ENCODE measurements at regions of chr22 and their contacts with region 1.

Region 1: GRCh38 chr22:43230971-43231723 is 44.2 kb upstream of the TTLL12 start:
- DNase-seq: no peak
- ATAC-seq: no peak
- H3K4me3 ChIP-seq: no peak overlapping the region
- H3K27ac ChIP-seq: no peak overlapping the region
- H3K4me1 ChIP-seq: no peaks in the 10 kb centered on the region
- H3K27me3 ChIP-seq: peaks cover 0 to 3% (median 0%) of the 10 kb centered on the region in 3 donors
- CTCF ChIP-seq: peak; percentile 48 to 84 (median 70)
- POLR2A ChIP-seq: no peak

Region 2: GRCh38 chr22:43346521-43346929 is 115.4 kb after region 1 on chr22:
- in situ Hi-C with region 1: no loop called
- intact Hi-C with region 1: loop called (anchors 5 kb)
- DNase-seq: peak in 1 of 2 donors; percentile 21
- ATAC-seq: no peak
- H3K4me3 ChIP-seq: no peak overlapping the region
- H3K27ac ChIP-seq: no peak overlapping the region
- H3K4me1 ChIP-seq: no peaks in the 10 kb centered on the region
- H3K27me3 ChIP-seq: peaks cover 26 to 46% (median 27%) of the 10 kb centered on the region in 3 donors
- CTCF ChIP-seq: peak in 4 of 5 experiments; percentile 37 to 58 (median 52)
- POLR2A ChIP-seq: no peak

Region 3: GRCh38 chr22:44497218-44497904 is 1266.2 kb after region 1 on chr22:
- in situ Hi-C with region 1: no loop called
- intact Hi-C with region 1: no loop called
- DNase-seq: no peak
- ATAC-seq: peak; percentile 8 to 13
- H3K4me3 ChIP-seq: peak overlapping the region; percentile 57 to 90 (median 68)
- H3K27ac ChIP-seq: peak overlapping the region; percentile 63 to 88 (median 82)
- H3K4me1 ChIP-seq: peaks cover 15% of the 10 kb centered on the region in 2 donors
- H3K27me3 ChIP-seq: peaks cover 0 to 4% (median 0%) of the 10 kb centered on the region in 3 donors
- CTCF ChIP-seq: no peak
- POLR2A ChIP-seq: no peak